ENCODE measurements at regions of chr3 and their contacts with region 1.

Region 1: DNA sequence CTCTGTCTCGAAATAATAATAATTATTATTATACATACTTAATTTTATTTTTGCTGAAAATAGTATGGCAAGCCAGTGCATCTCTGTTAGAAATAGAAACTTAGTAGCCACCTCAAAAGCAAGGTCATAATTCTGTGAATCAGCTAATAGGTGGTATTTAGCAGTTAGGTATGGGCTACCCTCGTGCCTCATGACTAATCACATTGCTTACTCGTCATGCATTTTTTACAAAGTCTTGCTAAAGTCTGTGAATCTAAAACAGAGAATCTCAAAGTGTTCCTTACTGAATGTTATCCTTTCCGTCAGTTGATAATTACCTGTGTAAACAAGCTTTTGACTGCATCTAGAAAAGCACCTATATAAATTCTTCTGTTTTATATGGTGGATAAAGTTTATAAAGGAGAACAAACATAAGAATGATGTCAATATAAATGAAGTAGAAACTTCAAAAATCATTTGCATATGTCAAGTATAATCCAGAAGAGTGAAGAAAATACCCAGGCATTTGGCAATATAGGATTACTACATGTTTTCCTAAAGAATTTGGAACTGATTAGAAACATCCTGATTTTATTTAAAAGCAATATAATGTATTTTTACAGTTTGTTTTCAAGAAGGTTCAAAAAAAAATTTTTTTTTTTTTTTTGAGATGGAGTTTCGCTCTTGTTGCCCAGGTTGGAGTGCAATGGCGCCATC is 6.2 kb downstream of the PPARG start:
- DNase-seq: peak; percentile 62
- H3K4me3 ChIP-seq: no peak overlapping the region
- CTCF ChIP-seq: no peak

Region 2: DNA sequence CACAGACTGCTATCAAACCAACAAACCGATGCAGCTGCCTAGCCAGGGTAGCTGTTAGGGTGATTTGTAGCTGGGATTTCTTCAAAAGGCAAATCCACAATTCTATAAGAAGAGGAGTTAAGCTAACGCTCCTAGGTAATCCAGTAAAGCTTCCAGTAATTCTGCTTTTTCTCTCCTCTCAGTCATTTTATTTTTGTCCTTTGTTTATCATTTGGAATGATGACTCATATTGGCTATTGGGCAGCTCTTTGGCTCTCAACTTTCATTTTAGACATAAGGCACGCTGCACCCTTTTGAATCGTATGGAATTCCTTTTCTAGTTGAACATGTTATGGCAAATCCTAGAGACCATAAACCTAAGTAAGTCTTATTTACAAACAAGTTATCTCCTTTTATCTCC is 59.3 kb before region 1 on chr3:
- in situ Hi-C with region 1: loop called (anchors 5 kb)
- DNase-seq: no peak
- H3K4me3 ChIP-seq: no peak overlapping the region
- CTCF ChIP-seq: no peak